ENCODE measurements at regions of chr14 and their contacts with region 1.

Region 1: DNA sequence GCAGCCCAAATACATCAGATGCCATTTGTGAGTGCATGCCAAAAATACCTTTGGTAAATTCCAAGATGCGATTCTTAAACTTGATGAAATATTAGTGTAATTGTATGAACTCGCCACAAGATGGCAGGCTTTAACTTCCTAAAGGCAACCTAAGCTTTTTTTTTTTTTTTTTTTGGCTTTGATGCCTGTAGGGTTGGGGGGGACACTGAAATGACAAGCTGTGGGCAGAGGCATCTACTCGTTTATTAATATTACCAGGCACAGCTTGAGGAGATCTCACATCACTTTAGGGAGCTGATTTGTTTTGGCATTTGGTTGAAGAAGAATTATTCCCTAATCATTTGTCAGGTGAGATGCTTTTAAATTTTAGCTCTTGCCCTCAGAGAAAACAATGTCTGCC is 126.7 kb upstream of the CCDC196 start:
- DNase-seq: peak; percentile 74 to 89 (median 81)
- H3K4me3 ChIP-seq: no peak overlapping the region
- H3K27ac ChIP-seq: no peak overlapping the region
- H3K4me1 ChIP-seq: no peaks in the 10 kb centered on the region
- H3K27me3 ChIP-seq: no peaks in the 10 kb centered on the region

Region 2: DNA sequence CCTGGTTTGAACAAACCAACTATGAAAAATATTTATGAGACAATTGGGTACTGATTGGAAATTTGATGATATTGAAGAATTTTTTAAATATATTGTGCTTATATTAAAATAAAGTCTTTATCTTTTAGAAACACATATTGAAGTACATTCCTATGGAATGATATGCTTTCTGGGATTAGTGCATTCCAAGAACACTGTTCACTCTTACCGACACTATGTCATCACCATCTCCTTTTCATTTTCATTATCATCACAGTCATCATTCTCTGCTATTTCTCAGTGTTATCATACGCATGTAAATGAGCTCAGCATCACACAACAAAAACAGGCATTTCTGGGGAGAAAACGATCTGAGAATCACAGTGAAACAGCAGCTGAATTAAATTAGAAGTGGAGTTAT is 386.6 kb before region 1 on chr14:
- CTCF ChIA-PET with region 1: no interaction called
- POLR2A ChIA-PET with region 1: no interaction called
- DNase-seq: no peak
- H3K4me3 ChIP-seq: no peak overlapping the region
- H3K27ac ChIP-seq: no peak overlapping the region
- H3K4me1 ChIP-seq: no peaks in the 10 kb centered on the region
- H3K27me3 ChIP-seq: no peaks in the 10 kb centered on the region

Region 3: GRCh38 chr14:66377574-66377973 is 18.1 kb after region 1 on chr14:
- CTCF ChIA-PET with region 1: interaction called, 10 read pairs
- POLR2A ChIA-PET with region 1: no interaction called
- DNase-seq: no peak
- H3K4me3 ChIP-seq: no peak overlapping the region
- H3K27ac ChIP-seq: no peak overlapping the region
- H3K4me1 ChIP-seq: no peaks in the 10 kb centered on the region
- H3K27me3 ChIP-seq: no peaks in the 10 kb centered on the region

Region 4: GRCh38 chr14:66395300-66395699 is 35.8 kb after region 1 on chr14:
- CTCF ChIA-PET with region 1: interaction called, 71 read pairs
- POLR2A ChIA-PET with region 1: no interaction called
- DNase-seq: peak; percentile 59 to 87 (median 84)
- H3K4me3 ChIP-seq: no peak overlapping the region
- H3K27ac ChIP-seq: no peak overlapping the region
- H3K4me1 ChIP-seq: peaks cover 0 to 3% (median 0%) of the 10 kb centered on the region in 4 experiments
- H3K27me3 ChIP-seq: no peaks in the 10 kb centered on the region

Region 5: GRCh38 chr14:66403183-66403582 is 43.7 kb after region 1 on chr14:
- CTCF ChIA-PET with region 1: interaction called, 71 read pairs
- POLR2A ChIA-PET with region 1: no interaction called
- DNase-seq: peak; percentile 43 to 61 (median 59)
- H3K4me3 ChIP-seq: peak overlapping the region in 1 of 7 experiments; percentile 58
- H3K27ac ChIP-seq: no peak overlapping the region
- H3K4me1 ChIP-seq: peaks cover 0 to 7% (median 3%) of the 10 kb centered on the region in 4 experiments
- H3K27me3 ChIP-seq: no peaks in the 10 kb centered on the region